Panc1 (cell line): ENCODE measurements at regions of chr12 and their contacts with region 1.

Region 1: GRCh38 chr12:105341010-105341409 is 10.5 kb downstream of the C12orf75 start:
- DNase-seq: no peak
- ATAC-seq: no peak
- H3K4me3 ChIP-seq: no peak overlapping the region
- H3K27ac ChIP-seq: no peak overlapping the region
- H3K4me1 ChIP-seq: peaks cover 3% of the 10 kb centered on the region; the same call in 1 of the 2 replicates
- H3K27me3 ChIP-seq: no peaks in the 10 kb centered on the region
- CTCF ChIP-seq: no peak

Region 2: GRCh38 chr12:104376650-104377541 is 964.1 kb before region 1 on chr12:
- CTCF ChIA-PET with region 1: interaction called, 10 read pairs
- POLR2A ChIA-PET with region 1: no interaction called
- in situ Hi-C with region 1: no loop called
- intact Hi-C with region 1: no loop called
- DNase-seq: no peak
- ATAC-seq: no peak
- H3K4me3 ChIP-seq: no peak overlapping the region
- H3K27ac ChIP-seq: no peak overlapping the region
- H3K4me1 ChIP-seq: 0 out of 2 replicates have a peak, but pooled peaks cover 2% of the 10 kb centered on the region
- H3K27me3 ChIP-seq: no peaks in the 10 kb centered on the region; the same call in 1 of the 2 replicates
- CTCF ChIP-seq: no peak

Region 3: DNA sequence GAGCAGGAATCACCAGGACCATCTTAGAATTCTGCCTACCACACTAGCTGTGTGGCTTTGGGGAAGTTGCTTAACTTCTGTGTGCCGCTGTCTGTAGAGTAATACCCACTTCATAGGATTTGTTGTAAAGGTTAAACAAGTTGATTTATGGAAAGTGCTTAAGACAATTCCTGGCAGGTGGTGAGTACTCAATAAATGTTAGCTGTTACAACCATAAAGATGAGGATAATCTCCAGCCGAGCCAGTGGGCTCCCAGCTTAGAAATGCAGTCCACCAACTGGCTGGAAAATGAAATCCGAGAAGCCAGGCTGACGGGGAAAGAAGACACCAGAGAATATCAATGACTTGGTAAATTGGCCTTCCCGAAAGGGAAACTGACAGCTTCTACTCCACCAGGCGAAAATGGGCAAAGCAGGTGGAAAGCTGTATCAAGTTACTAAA is 710.8 kb before region 1 on chr12:
- CTCF ChIA-PET with region 1: no interaction called
- POLR2A ChIA-PET with region 1: no interaction called
- in situ Hi-C with region 1: no loop called
- intact Hi-C with region 1: no loop called
- DNase-seq: no peak
- ATAC-seq: no peak
- H3K4me3 ChIP-seq: no peak overlapping the region
- H3K27ac ChIP-seq: no peak overlapping the region
- H3K4me1 ChIP-seq: no peaks in the 10 kb centered on the region
- H3K27me3 ChIP-seq: no peaks in the 10 kb centered on the region
- CTCF ChIP-seq: no peak

Region 4: GRCh38 chr12:105382771-105383622 is 42.0 kb after region 1 on chr12:
- CTCF ChIA-PET with region 1: no interaction called
- POLR2A ChIA-PET with region 1: interaction called, 13 read pairs
- in situ Hi-C with region 1: no loop called
- intact Hi-C with region 1: no loop called
- DNase-seq: peak; percentile 32
- ATAC-seq: peak; percentile 85
- H3K4me3 ChIP-seq: no peak overlapping the region
- H3K27ac ChIP-seq: no peak overlapping the region
- H3K4me1 ChIP-seq: no peaks in the 10 kb centered on the region
- H3K27me3 ChIP-seq: no peaks in the 10 kb centered on the region
- CTCF ChIP-seq: peak; percentile 81